ENCODE measurements at regions of chr5 and their contacts with region 1.

Region 1: GRCh38 chr5:125011014-125011413 is 264.6 kb upstream of the ZNF608 start:
- DNase-seq: no peak
- H3K4me3 ChIP-seq: no peak overlapping the region
- CTCF ChIP-seq: no peak
- POLR2A ChIP-seq: no peak

Region 2: GRCh38 chr5:124871303-124871702 is 139.7 kb before region 1 on chr5:
- intact Hi-C with region 1: loop called (anchors 10 kb)
- DNase-seq: no peak
- H3K4me3 ChIP-seq: no peak overlapping the region
- CTCF ChIP-seq: no peak
- POLR2A ChIP-seq: no peak

Region 3: GRCh38 chr5:124963236-124963961 is 47.6 kb before region 1 on chr5:
- intact Hi-C with region 1: no loop called
- DNase-seq: no peak
- H3K4me3 ChIP-seq: no peak overlapping the region
- CTCF ChIP-seq: no peak
- POLR2A ChIP-seq: no peak

Region 4: DNA sequence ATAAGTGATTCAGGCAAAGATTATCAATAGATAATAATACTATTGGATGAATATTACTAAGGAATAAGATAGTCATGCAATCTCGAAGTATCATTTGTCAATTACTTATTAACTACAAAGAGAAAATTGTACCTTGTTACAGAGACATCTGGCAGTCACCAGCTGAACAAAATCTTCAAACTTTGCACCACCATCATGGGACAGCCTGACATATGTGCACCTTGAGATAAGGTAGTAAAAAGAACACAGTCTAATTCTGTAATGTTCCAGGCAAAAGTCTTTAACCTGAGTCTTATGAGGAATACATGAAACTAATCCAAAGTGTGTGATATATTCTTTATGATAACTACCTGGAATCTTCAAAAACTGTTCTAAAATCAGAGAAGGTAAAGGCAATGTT is 158.4 kb after region 1 on chr5:
- intact Hi-C with region 1: no loop called
- DNase-seq: no peak
- H3K4me3 ChIP-seq: no peak overlapping the region
- CTCF ChIP-seq: no peak
- POLR2A ChIP-seq: no peak

Region 5: DNA sequence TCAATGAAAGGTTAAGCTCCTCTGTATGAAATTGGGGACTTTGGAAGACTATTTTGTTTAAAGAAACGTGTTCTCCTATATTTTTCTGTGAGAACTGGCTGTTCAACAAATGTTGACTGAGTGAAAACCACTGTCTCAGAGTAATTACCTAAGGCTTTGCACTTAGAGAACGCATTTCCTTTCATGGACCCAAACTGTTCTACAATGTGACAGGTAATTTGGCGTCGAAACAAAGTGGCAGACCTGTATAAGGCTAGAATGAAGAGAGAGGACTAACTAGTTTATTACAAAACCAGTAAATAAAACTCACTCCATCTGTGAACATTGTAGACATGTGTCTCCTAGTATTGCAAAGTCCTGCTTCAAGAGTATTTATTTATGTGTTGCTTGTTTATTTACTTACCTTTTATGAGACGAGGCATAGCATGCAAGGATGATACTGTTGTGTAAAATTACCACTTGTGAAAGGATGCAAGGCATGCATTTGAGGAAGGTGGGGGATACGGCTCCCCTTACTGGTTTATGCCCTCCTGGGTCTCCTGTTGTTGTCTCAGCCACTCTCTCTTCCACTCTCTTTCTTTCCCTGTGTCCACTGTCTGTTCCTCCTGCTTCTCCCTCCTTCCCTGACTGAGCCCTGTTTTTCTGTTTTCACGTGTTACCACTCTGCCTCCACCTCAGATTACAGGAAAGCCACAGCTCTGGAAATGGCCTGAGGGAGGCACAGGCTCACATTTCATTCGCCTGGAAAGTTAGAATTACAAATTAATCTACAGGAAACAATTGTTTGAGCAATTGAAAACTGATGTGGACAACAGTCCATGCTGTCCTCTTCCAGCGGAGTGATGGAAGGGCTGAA is 179.4 kb after region 1 on chr5:
- intact Hi-C with region 1: no loop called
- DNase-seq: no peak
- H3K4me3 ChIP-seq: no peak overlapping the region
- CTCF ChIP-seq: no peak
- POLR2A ChIP-seq: no peak